AG04450 (cell line): ENCODE measurements at regions of chr14 and their contacts with region 1.

Region 1: DNA sequence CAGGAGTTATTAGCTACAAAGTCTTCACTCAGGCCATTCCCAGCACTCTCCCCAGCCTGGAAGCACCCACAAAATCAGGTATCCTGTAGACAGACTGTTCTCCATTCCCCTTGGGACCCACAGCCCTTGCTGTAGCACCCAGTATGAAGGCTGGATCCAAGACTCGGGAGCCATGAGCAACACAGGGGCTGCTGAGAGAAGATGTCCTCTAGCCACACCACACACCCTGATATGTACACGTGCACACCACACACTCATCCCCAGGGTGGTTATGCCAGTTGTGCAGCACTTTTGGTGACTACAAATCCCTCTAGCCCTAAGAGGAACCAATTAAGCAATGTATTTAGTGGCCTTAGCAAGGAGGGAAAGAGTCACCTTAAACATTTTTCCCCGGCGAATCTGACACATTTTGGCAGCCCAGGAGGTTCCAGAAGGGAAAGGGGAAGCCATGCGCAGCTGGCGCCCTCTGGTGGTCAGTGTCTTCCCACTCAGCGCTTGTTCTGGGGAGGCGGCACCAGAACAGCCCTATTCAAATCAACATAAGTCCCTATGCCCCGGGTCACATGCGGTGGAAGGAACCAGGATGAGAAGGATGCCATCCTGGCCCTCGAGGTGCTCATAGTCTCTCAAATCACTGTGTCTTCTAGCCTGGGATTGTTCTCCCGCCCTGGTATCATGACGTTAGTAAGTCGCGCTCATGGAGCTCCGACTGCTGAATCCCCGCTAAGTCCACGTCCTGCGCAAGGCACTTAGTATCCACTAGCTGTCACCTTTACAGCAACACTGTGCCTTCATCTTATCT is 96.9 kb downstream of the GCH1 start:
- DNase-seq: peak; percentile 65
- H3K4me3 ChIP-seq: peak overlapping the region; percentile 18
- H3K27ac ChIP-seq: no peak overlapping the region
- H3K27me3 ChIP-seq: peaks cover 5% of the 10 kb centered on the region
- CTCF ChIP-seq: peak; percentile 99

Region 2: GRCh38 chr14:54818201-54819133 is 12.7 kb after region 1 on chr14:
- CTCF ChIA-PET with region 1: interaction called, 24 read pairs
- POLR2A ChIA-PET with region 1: no interaction called
- DNase-seq: no peak
- H3K4me3 ChIP-seq: no peak overlapping the region
- H3K27ac ChIP-seq: no peak overlapping the region
- H3K27me3 ChIP-seq: peaks cover 8% of the 10 kb centered on the region
- CTCF ChIP-seq: no peak

Region 3: DNA sequence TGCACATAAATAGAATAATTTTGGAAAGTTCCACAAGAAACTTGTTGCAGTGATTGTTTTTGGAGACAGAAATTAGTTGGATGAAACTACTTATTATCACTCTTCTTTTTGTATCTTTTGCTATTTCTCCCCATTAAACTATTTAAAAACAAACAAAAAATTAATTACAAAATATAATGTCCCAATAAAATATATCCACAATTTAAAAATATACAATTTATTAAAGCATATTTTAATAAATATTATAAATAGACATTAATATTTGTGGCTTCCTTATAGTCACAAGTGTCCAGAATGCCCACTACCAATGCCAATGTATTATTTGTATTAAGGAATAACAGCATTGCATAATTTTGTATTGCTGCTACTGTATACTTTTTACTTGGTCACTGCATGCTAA is 149.4 kb after region 1 on chr14:
- CTCF ChIA-PET with region 1: no interaction called
- POLR2A ChIA-PET with region 1: no interaction called
- DNase-seq: no peak
- H3K4me3 ChIP-seq: no peak overlapping the region
- H3K27ac ChIP-seq: no peak overlapping the region
- H3K27me3 ChIP-seq: no peaks in the 10 kb centered on the region
- CTCF ChIP-seq: no peak